PC-3 (cell line): ENCODE measurements at regions of chr4 and their contacts with region 1.

Region 1: DNA sequence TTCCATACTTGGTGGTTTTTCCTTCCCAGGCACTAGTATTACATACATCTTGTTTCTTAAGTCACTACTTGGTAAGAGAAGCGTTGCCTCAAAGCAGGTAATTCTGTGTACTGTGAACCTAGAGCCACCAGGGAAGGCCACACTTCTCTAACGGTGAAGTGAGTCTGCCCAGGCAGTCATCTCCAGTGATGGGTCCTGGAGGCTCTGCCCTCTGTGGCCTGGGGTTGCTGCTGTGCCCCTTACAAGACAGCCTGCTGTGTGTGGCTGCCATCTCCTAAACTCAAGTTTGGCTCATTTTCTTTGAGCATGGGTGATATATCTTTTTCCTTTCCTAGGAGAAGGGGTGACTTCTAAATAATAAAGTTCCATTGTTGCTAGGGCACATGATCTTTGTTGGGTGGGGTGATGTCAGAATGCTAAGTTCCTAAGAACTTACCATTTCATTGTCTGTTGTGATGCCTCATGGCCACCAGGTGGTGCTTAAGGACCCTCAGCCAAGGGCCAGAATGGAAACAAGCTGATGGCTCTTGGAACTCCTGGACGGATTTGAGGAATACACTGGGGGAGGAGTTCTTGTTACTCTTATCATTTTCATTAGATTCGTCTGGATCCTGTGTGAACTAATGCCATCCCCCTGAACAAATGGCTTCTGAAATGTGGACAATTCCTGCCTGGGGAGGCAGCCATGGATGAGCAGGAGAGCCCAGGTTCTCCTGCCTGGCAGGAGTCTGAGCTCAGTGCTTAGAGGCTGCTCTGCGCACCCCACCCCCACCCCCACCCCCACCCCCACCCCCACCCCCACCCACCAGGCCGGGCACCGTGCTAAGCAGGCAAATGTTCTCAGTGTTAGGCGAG is 41.1 kb upstream of the WDR1 start:
- DNase-seq: peak; percentile 56
- ATAC-seq: peak; percentile 59; the same call in 1 of the 2 replicates
- H3K4me3 ChIP-seq: no peak overlapping the region
- H3K27ac ChIP-seq: no peak overlapping the region
- H3K4me1 ChIP-seq: no peaks in the 10 kb centered on the region
- H3K27me3 ChIP-seq: no peaks in the 10 kb centered on the region
- CTCF ChIP-seq: peak; percentile 73

Region 2: DNA sequence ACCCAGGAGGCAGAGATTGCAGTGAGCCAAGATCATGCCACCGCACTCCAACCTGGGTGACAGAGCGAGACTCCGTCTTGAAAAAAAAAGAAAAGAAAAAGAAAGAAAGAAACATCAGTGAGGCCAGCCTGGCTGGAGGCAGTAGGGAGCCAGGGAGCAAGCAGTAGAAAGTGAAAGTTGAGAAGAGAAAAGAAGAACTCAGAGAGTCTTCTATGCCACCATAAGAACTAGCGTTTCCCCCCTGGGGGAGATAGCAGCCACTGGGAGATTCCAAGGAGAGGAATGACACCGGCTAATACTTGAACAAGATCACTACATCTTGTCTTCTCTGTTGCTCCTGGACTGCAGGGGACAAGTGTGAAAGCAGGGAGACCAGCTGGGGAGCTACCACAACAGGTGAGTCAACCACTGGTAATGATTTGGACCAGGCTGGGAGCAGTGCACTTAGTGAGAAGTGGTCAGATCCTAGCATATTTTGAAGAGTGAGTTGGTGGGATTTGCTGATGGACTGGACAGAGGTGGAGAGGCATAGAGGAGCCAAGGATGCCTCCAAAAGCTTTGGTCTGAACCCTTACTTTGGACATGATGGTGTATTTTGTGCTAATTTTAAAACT is 169.8 kb before region 1 on chr4:
- CTCF ChIA-PET with region 1: no interaction called
- POLR2A ChIA-PET with region 1: no interaction called
- intact Hi-C with region 1: no loop called
- DNase-seq: no peak
- ATAC-seq: no peak
- H3K4me3 ChIP-seq: no peak overlapping the region
- H3K27ac ChIP-seq: no peak overlapping the region
- H3K4me1 ChIP-seq: no peaks in the 10 kb centered on the region
- H3K27me3 ChIP-seq: no peaks in the 10 kb centered on the region
- CTCF ChIP-seq: no peak

Region 3: DNA sequence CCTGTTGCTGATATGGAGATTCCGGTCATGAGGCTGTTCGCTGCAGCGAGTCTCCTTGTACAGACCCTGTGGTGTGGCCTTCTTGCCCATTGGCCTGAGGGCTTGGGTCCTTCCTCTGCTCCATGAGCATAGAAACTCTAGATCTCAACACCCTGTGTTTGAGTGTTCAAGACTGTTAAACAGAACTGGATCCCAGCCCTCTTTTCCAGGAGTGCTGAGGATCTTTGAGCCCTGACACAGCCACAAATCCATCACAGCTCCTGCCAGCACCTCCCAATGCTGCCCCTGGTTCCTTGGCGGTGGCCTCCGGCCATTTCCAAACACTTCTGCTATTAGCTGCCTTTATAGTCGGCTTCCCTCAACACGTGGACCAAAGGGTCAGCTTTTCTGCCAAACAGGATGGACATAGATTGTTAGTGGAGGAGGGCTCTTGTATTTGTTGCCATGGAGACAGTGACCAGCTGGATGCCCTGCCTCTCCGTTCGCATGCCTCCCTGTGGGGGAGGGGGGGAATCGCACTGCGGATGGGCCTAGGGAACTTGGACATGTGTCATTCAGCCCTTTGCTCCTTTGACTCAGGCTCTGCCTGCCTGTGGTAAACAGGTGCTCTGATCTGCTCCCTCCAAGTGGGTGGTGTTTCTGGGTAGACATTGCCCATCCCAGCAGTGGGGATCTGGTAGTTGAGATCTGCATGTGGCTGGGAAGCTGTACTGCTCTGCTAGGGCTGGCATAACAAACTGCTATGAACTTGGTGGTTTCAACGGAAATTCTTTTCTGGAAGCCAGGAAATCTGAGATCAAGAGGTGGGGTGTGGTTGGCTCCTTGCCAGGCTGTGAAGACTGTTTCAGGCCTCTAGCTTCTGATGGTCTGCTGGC is 34.2 kb before region 1 on chr4:
- CTCF ChIA-PET with region 1: no interaction called
- POLR2A ChIA-PET with region 1: no interaction called
- intact Hi-C with region 1: no loop called
- DNase-seq: no peak
- ATAC-seq: no peak
- H3K4me3 ChIP-seq: no peak overlapping the region
- H3K27ac ChIP-seq: no peak overlapping the region
- H3K4me1 ChIP-seq: no peaks in the 10 kb centered on the region
- H3K27me3 ChIP-seq: no peaks in the 10 kb centered on the region
- CTCF ChIP-seq: no peak

Region 4: DNA sequence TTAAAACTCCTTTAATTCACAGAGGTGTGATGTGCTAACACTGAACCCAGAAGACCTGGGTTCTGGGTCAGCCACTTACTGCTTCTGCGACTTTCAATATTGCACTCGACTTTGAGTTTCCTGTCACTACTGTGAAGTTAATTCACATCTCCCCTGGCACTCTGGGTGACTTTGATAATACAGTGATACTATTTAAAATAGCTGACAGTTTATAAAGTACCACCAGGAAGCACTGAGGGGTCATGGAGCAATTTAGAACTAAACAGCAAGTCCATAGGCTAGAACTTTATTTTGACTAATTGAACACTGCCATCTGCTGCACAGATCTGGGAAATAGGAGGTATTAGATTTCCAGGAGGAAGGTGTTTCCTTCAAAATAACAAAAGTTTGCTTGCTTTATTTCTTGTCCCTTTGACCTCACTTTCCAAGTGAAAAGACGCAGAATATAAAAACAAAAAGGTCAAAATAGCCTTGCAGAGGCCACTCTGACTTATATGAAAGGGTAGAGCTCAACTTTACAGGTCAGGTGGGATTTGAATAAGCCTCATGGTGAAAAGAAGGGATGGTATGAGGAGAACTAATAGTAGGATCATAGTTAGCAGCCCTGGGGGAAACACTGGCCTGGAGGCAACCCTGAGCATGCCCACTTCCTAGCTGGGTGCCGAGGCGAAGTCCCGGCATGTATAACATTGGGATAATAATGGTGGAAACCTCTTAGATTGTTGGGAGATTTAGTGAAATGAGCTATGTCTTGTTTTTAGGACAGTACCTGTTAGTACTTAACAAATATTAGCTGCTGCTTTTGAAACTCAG is 246.1 kb after region 1 on chr4:
- CTCF ChIA-PET with region 1: no interaction called
- POLR2A ChIA-PET with region 1: no interaction called
- intact Hi-C with region 1: loop called (anchors 10 kb)
- DNase-seq: peak; percentile 48
- ATAC-seq: peak; percentile 55
- H3K4me3 ChIP-seq: no peak overlapping the region
- H3K27ac ChIP-seq: no peak overlapping the region
- H3K4me1 ChIP-seq: no peaks in the 10 kb centered on the region
- H3K27me3 ChIP-seq: no peaks in the 10 kb centered on the region
- CTCF ChIP-seq: peak; percentile 61

Region 5: GRCh38 chr4:10461091-10461849 is 303.6 kb after region 1 on chr4:
- CTCF ChIA-PET with region 1: no interaction called
- POLR2A ChIA-PET with region 1: no interaction called
- intact Hi-C with region 1: no loop called
- DNase-seq: no peak
- ATAC-seq: no peak
- H3K4me3 ChIP-seq: no peak overlapping the region
- H3K27ac ChIP-seq: no peak overlapping the region
- H3K4me1 ChIP-seq: no peaks in the 10 kb centered on the region; the same call in 1 of the 2 replicates
- H3K27me3 ChIP-seq: no peaks in the 10 kb centered on the region
- CTCF ChIP-seq: peak; percentile 45

Region 6: DNA sequence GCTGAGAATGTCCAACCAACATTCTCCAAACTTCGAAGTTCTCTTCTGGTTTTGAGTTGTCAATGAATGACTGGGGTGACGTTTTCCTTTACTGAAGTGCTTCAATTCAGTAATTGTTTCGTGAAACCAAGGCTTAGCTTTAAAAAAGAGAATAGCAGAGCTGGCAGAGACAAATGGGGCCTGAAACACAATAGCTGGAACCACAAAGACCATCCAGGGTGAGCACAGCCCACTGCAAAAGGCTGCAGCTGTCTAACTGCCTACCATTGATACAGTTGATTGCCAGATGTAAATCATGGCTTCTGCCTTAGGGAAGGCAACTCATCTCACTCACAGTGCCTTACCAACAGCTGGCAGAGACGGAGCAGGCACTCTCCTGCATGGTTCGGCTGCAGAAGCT is 378.2 kb after region 1 on chr4:
- CTCF ChIA-PET with region 1: no interaction called
- POLR2A ChIA-PET with region 1: no interaction called
- intact Hi-C with region 1: loop called (anchors 2 kb)
- DNase-seq: no peak
- ATAC-seq: no peak
- H3K4me3 ChIP-seq: no peak overlapping the region
- H3K27ac ChIP-seq: no peak overlapping the region
- H3K4me1 ChIP-seq: no peaks in the 10 kb centered on the region
- H3K27me3 ChIP-seq: peaks cover 12% of the 10 kb centered on the region; the same call in 1 of the 2 replicates
- CTCF ChIP-seq: no peak